CD4-positive, alpha-beta T cell (primary cell): ENCODE measurements at regions of chr7 and their contacts with region 1.

Region 1: DNA sequence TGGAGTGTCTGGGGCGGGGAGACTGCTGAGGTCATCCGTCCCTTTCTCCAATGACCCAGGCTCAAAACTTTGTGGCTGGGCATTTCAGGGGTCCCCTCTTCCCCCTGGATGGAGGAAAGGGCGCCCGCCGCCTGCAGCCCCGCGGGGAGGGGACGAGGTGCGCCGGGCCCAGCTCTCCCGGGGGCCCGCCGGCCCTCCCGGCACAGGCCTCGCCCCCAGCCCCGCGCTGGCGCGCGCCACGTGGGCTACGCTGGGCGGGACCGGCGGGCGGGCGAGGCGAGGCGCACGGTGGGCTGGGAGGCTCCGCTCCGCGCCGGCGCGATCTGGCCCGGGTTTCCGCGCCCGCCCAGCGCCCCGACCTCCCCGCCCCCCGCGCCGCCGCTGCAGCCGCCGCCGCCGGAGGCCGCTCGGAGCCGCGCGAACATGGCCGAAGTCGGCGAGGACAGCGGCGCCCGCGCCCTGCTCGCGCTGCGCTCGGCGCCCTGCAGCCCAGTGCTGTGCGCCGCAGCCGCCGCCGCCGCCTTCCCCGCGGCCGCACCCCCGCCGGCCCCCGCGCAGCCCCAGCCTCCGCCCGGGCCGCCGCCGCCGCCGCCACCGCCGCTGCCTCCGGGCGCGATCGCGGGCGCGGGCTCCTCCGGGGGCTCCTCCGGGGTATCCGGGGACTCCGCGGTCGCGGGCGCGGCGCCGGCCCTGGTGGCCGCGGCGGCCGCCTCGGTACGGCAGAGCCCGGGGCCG is at the start of gene FOXK1:
- DNase-seq: peak; percentile 54 to 93 (median 79)
- ATAC-seq: peak; percentile 77
- H3K4me3 ChIP-seq: peak within 1 kb of the TSS; percentile 63
- H3K4me3 Mint-ChIP-seq: peak within 1 kb of the TSS; percentile 97
- H3K27ac ChIP-seq: peak within 1 kb of the TSS; percentile 88 to 94
- H3K27ac Mint-ChIP-seq: peak within 1 kb of the TSS; percentile 98
- H3K4me1 ChIP-seq: peaks cover 44% of the 10 kb centered on the region
- H3K4me1 Mint-ChIP-seq: peaks cover 33% of the 10 kb centered on the region
- H3K27me3 ChIP-seq: no peaks in the 10 kb centered on the region
- H3K27me3 Mint-ChIP-seq: no peaks in the 10 kb centered on the region
- CTCF ChIP-seq: no peak
- total RNA-seq, gene FOXK1: 67.8 to 68.1 TPM

Region 2: GRCh38 chr7:4610768-4611467 is 71.1 kb before region 1 on chr7:
- CTCF ChIA-PET with region 1: no interaction called
- POLR2A ChIA-PET with region 1: no interaction called
- intact Hi-C with region 1: loop called (anchors 1 to 2 kb)
- DNase-seq: peak; percentile 23 to 84 (median 40)
- ATAC-seq: peak; percentile 91
- H3K4me3 ChIP-seq: no peak overlapping the region
- H3K4me3 Mint-ChIP-seq: no peak overlapping the region
- H3K27ac ChIP-seq: no peak overlapping the region
- H3K27ac Mint-ChIP-seq: no peak overlapping the region
- H3K4me1 ChIP-seq: peaks cover 12% of the 10 kb centered on the region
- H3K4me1 Mint-ChIP-seq: peaks cover 20% of the 10 kb centered on the region
- H3K27me3 ChIP-seq: no peaks in the 10 kb centered on the region
- H3K27me3 Mint-ChIP-seq: peaks cover 4% of the 10 kb centered on the region
- CTCF ChIP-seq: peak; percentile 84

Region 3: GRCh38 chr7:4738711-4739527 is 56.9 kb after region 1 on chr7:
- CTCF ChIA-PET with region 1: no interaction called
- POLR2A ChIA-PET with region 1: interaction called, 5 read pairs
- intact Hi-C with region 1: loop called in 1 of 2 experiments (anchors 1 kb)
- DNase-seq: peak in 5 of 14 experiments; percentile 33 to 69 (median 48)
- ATAC-seq: peak; percentile 25
- H3K4me3 ChIP-seq: peak overlapping the region; percentile 35
- H3K4me3 Mint-ChIP-seq: peak overlapping the region; percentile 87
- H3K27ac ChIP-seq: peak overlapping the region; percentile 41 to 62
- H3K27ac Mint-ChIP-seq: peak overlapping the region; percentile 94
- H3K4me1 ChIP-seq: peaks cover 45% of the 10 kb centered on the region
- H3K4me1 Mint-ChIP-seq: peaks cover 75% of the 10 kb centered on the region
- H3K27me3 ChIP-seq: no peaks in the 10 kb centered on the region
- H3K27me3 Mint-ChIP-seq: no peaks in the 10 kb centered on the region
- CTCF ChIP-seq: no peak

Region 4: DNA sequence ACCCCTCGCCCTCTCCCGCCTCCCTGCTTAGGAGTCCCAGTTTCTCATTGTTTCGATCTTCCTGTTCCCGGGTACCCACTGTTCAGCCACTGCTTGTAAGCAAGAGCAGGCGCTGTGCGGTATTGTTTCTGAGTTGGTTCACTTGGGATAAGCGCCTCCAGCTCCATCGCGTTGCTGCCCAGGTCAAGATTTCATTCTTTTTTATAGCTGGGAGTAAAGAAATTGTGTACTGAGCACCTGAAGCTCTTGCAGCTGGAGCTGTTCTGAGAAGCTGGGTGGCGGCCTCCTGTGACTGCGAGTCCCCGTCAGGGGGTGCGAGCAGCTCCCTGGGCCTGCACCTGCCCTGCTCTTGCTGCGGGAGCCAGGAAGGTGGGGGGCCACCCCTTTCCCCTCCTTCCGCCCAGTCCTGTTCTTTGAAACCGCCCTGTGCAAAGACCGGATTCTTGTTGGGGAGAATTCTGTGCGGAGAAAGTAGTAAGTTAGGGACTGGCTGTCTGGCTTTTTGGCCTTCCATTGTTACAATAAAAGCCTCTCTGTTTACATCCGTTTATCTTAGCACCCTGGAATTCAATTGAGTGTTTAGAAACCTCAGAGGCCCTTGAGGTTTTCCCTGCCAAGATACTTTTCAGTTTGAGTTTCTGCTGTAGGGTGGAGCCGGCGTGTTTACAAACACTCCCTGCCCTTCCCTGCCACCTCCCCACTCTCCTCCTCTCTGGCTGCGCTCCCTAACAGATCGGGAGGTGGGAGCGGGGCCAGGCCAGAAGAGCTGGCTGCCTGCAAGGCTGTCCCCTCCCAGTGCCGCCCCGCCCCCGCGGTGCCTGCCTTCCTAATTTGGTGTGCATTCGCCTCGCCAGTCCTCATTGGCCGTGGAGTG is 62.6 kb after region 1 on chr7:
- CTCF ChIA-PET with region 1: no interaction called
- POLR2A ChIA-PET with region 1: interaction called, 6 read pairs
- intact Hi-C with region 1: loop called (anchors 1 to 2 kb)
- DNase-seq: peak; percentile 39 to 84 (median 73)
- ATAC-seq: peak; percentile 73
- H3K4me3 ChIP-seq: peak overlapping the region; percentile 58
- H3K4me3 Mint-ChIP-seq: peak overlapping the region; percentile 90
- H3K27ac ChIP-seq: peak overlapping the region; percentile 68 to 94
- H3K27ac Mint-ChIP-seq: peak overlapping the region; percentile 93
- H3K4me1 ChIP-seq: peaks cover 69% of the 10 kb centered on the region
- H3K4me1 Mint-ChIP-seq: peaks cover 81% of the 10 kb centered on the region
- H3K27me3 ChIP-seq: no peaks in the 10 kb centered on the region
- H3K27me3 Mint-ChIP-seq: no peaks in the 10 kb centered on the region
- CTCF ChIP-seq: no peak

Region 5: GRCh38 chr7:4753711-4754432 is 71.8 kb after region 1 on chr7:
- CTCF ChIA-PET with region 1: no interaction called
- POLR2A ChIA-PET with region 1: interaction called, 3 read pairs
- intact Hi-C with region 1: loop called (anchors 1 to 2 kb)
- DNase-seq: peak; percentile 81 to 92 (median 86)
- ATAC-seq: peak; percentile 98
- H3K4me3 ChIP-seq: no peak overlapping the region
- H3K4me3 Mint-ChIP-seq: peak overlapping the region; percentile 48
- H3K27ac ChIP-seq: peak overlapping the region in 1 of 2 donors; percentile 29
- H3K27ac Mint-ChIP-seq: peak overlapping the region; percentile 78
- H3K4me1 ChIP-seq: peaks cover 32% of the 10 kb centered on the region
- H3K4me1 Mint-ChIP-seq: peaks cover 19% of the 10 kb centered on the region
- H3K27me3 ChIP-seq: no peaks in the 10 kb centered on the region
- H3K27me3 Mint-ChIP-seq: no peaks in the 10 kb centered on the region
- CTCF ChIP-seq: peak; percentile 78

Region 6: GRCh38 chr7:5045558-5046396 is 363.7 kb after region 1 on chr7 and contains the start of gene RBAK:
- CTCF ChIA-PET with region 1: no interaction called
- POLR2A ChIA-PET with region 1: no interaction called
- intact Hi-C with region 1: loop called in 1 of 2 experiments (anchors 5 kb)
- DNase-seq: peak; percentile 74 to 96 (median 87)
- ATAC-seq: peak; percentile 99
- H3K4me3 ChIP-seq: peak within 1 kb of the TSS; percentile 80
- H3K4me3 Mint-ChIP-seq: peak within 1 kb of the TSS; percentile 95
- H3K27ac ChIP-seq: peak within 1 kb of the TSS; percentile 9 to 68
- H3K27ac Mint-ChIP-seq: peak within 1 kb of the TSS; percentile 82
- H3K4me1 ChIP-seq: peaks cover 26% of the 10 kb centered on the region
- H3K4me1 Mint-ChIP-seq: peaks cover 44% of the 10 kb centered on the region
- H3K27me3 ChIP-seq: no peaks in the 10 kb centered on the region
- H3K27me3 Mint-ChIP-seq: no peaks in the 10 kb centered on the region
- CTCF ChIP-seq: no peak
- total RNA-seq, gene RBAK: 11.0 to 12.4 TPM